ENCODE measurements at regions of chr17 and their contacts with region 1.

Region 1: DNA sequence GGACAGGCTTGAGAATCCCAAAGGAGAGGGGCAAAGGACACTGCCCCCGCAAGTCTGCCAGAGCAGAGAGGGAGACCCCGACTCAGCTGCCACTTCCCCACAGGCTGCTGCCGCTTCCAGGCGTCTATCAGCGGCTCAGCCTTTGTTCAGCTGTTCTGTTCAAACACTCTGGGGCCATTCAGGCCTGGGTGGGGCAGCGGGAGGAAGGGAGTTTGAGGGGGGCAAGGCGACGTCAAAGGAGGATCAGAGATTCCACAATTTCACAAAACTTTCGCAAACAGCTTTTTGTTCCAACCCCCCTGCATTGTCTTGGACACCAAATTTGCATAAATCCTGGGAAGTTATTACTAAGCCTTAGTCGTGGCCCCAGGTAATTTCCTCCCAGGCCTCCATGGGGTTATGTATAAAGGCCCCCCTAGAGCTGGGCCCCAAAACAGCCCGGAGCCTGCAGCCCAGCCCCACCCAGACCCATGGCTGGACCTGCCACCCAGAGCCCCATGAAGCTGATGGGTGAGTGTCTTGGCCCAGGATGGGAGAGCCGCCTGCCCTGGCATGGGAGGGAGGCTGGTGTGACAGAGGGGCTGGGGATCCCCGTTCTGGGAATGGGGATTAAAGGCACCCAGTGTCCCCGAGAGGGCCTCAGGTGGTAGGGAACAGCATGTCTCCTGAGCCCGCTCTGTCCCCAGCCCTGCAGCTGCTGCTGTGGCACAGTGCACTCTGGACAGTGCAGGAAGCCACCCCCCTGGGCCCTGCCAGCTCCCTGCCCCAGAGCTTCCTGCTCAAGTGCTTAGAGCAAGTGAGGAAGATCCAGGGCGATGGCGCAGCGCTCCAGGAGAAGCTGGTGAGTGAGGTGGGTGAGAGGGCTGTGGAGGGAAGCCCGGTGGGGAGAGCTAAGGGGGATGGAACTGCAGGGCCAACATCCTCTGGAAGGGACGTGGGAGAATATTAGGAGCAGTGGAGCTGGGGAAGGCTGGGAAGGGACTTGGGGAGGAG is at the start of gene CSF3:
- DNase-seq: peak; percentile 19
- H3K4me3 ChIP-seq: no peak within 1 kb of the TSS
- H3K27ac ChIP-seq: no peak within 1 kb of the TSS
- H3K4me1 ChIP-seq: no peaks in the 10 kb centered on the region; a peak in 1 of 4 replicates
- H3K27me3 ChIP-seq: no peaks in the 10 kb centered on the region
- CTCF ChIP-seq: no peak
- EP300 ChIP-seq: no peak
- RAD21 ChIP-seq: no peak
- polyA plus RNA-seq, gene CSF3: not detected in 2 replicates

Region 2: DNA sequence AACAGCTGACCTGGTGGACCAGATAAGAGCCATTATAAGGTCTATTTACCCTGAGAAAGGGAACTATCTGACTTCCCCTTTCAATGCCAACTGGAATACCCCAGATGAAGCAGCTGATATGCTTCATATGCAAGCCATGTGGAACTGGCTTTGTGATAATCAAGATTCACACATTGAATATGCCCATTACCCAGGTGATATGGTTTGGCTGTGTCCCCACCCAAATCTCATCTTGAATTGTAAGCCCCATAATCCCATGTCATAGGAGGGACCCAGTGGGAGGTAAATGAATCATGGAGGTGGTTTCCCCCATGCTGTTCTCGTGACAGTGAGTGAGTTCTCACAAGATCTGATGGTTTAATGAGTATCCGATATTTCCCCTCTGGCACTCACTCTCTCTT is 193.2 kb before region 1 on chr17:
- CTCF ChIA-PET with region 1: no interaction called
- POLR2A ChIA-PET with region 1: no interaction called
- DNase-seq: no peak
- H3K4me3 ChIP-seq: no peak overlapping the region
- H3K27ac ChIP-seq: no peak overlapping the region
- H3K4me1 ChIP-seq: no peaks in the 10 kb centered on the region
- H3K27me3 ChIP-seq: no peaks in the 10 kb centered on the region; the same call in 1 of the 2 replicates
- CTCF ChIP-seq: no peak
- EP300 ChIP-seq: no peak
- RAD21 ChIP-seq: no peak

Region 3: GRCh38 chr17:39999067-39999466 is 16.2 kb before region 1 on chr17:
- CTCF ChIA-PET with region 1: interaction called, 10 read pairs
- POLR2A ChIA-PET with region 1: no interaction called
- DNase-seq: no peak
- H3K4me3 ChIP-seq: no peak overlapping the region
- H3K27ac ChIP-seq: no peak overlapping the region
- H3K4me1 ChIP-seq: no peaks in the 10 kb centered on the region
- H3K27me3 ChIP-seq: no peaks in the 10 kb centered on the region
- CTCF ChIP-seq: no peak
- EP300 ChIP-seq: no peak
- RAD21 ChIP-seq: no peak

Region 4: GRCh38 chr17:40457964-40458791 is 442.9 kb after region 1 on chr17:
- CTCF ChIA-PET with region 1: no interaction called
- POLR2A ChIA-PET with region 1: no interaction called
- DNase-seq: peak; percentile 73
- H3K4me3 ChIP-seq: peak overlapping the region in 1 of 2 experiments; percentile 17; a peak in 1 of 4 replicates
- H3K27ac ChIP-seq: peak overlapping the region; percentile 68 to 92
- H3K4me1 ChIP-seq: peaks cover 33 to 84% of the 10 kb centered on the region in 2 experiments
- H3K27me3 ChIP-seq: no peaks in the 10 kb centered on the region
- CTCF ChIP-seq: no peak
- EP300 ChIP-seq: peak; percentile 80 to 95; a peak in 3 of 4 replicates
- RAD21 ChIP-seq: no peak

Measured in SK-N-SH (cell line).